Caco-2 (cell line): ENCODE measurements at regions of chr7 and their contacts with region 1.

Region 1: GRCh38 chr7:10455936-10456335 is 517.7 kb upstream of the PHF14 start:
- DNase-seq: no peak
- H3K4me3 ChIP-seq: no peak overlapping the region
- H3K4me3 Mint-ChIP-seq: no peak overlapping the region
- H3K27ac Mint-ChIP-seq: no peak overlapping the region
- H3K4me1 ChIP-seq: no peaks in the 10 kb centered on the region
- H3K4me1 Mint-ChIP-seq: no peaks in the 10 kb centered on the region
- H3K27me3 ChIP-seq: no peaks in the 10 kb centered on the region
- H3K27me3 Mint-ChIP-seq: no peaks in the 10 kb centered on the region
- CTCF ChIP-seq: no peak

Region 2: DNA sequence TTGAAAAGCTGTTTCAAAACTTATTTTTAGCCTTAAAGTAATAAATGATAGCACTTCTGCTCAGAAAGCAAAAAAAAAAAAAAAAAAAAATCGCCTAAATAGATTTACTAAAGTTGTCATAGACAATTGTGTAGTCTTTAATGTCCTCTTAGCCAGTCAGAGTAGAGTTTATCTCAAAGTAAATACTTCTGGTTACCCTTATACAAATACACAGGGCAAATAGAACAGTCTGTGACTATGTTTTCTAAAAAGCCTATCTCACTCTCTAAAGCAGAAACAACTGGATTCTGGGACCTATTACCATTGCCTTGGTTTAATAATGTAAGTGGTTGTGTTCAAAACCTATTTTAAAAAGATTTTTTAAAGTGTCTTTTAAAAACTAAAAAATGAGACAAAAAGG is 1532.2 kb after region 1 on chr7:
- CTCF ChIA-PET with region 1: no interaction called
- POLR2A ChIA-PET with region 1: no interaction called
- intact Hi-C with region 1: loop called (anchors 5 kb)
- DNase-seq: no peak
- H3K4me3 ChIP-seq: no peak overlapping the region
- H3K4me3 Mint-ChIP-seq: no peak overlapping the region
- H3K27ac Mint-ChIP-seq: no peak overlapping the region
- H3K4me1 ChIP-seq: peaks cover 24% of the 10 kb centered on the region
- H3K4me1 Mint-ChIP-seq: peaks cover 29% of the 10 kb centered on the region
- H3K27me3 ChIP-seq: no peaks in the 10 kb centered on the region
- H3K27me3 Mint-ChIP-seq: no peaks in the 10 kb centered on the region
- CTCF ChIP-seq: no peak